Naive thymus-derived CD8-positive, alpha-beta T cell (primary cell): ENCODE measurements at regions of chr17 and their contacts with region 1.

Region 1: GRCh38 chr17:75784473-75785015 is at the start of gene UNK:
- DNase-seq: peak; percentile 85 to 99 (median 95)
- ATAC-seq: peak; percentile 71 to 76
- H3K4me3 Mint-ChIP-seq: peak within 1 kb of the TSS; percentile 86 to 97 (median 92)
- H3K27ac Mint-ChIP-seq: peak within 1 kb of the TSS; percentile 94 to 100 (median 100)
- H3K4me1 Mint-ChIP-seq: peaks cover 21 to 72% (median 49%) of the 10 kb centered on the region in 4 donors
- H3K27me3 Mint-ChIP-seq: peaks cover 0 to 4% (median 0%) of the 10 kb centered on the region in 5 donors
- polyA plus RNA-seq, gene UNK: 24.4 to 26.9 (median 26.2) TPM

Region 2: GRCh38 chr17:75693500-75694481 is 90.8 kb before region 1 on chr17:
- POLR2A ChIA-PET with region 1: no interaction called
- DNase-seq: no peak
- ATAC-seq: no peak
- H3K4me3 Mint-ChIP-seq: no peak overlapping the region
- H3K27ac Mint-ChIP-seq: peak overlapping the region in 2 of 10 donors; percentile 11 to 19
- H3K4me1 Mint-ChIP-seq: peaks cover 14 to 39% (median 36%) of the 10 kb centered on the region in 4 donors
- H3K27me3 Mint-ChIP-seq: no peaks in the 10 kb centered on the region

Region 3: GRCh38 chr17:75827252-75828115 is 42.9 kb after region 1 on chr17:
- POLR2A ChIA-PET with region 1: interaction called, 74 read pairs
- DNase-seq: peak; percentile 47 to 82 (median 58)
- ATAC-seq: peak; percentile 68 to 70
- H3K4me3 Mint-ChIP-seq: peak overlapping the region; percentile 52 to 79 (median 63)
- H3K27ac Mint-ChIP-seq: peak overlapping the region; percentile 25 to 93 (median 85)
- H3K4me1 Mint-ChIP-seq: peaks cover 6 to 33% (median 20%) of the 10 kb centered on the region in 4 donors
- H3K27me3 Mint-ChIP-seq: no peaks in the 10 kb centered on the region

Region 4: GRCh38 chr17:75877752-75878173 is 93.2 kb after region 1 on chr17:
- POLR2A ChIA-PET with region 1: interaction called, 13 read pairs
- DNase-seq: peak; percentile 51 to 81 (median 66)
- ATAC-seq: peak; percentile 71
- H3K4me3 Mint-ChIP-seq: peak overlapping the region; percentile 80 to 92 (median 87)
- H3K27ac Mint-ChIP-seq: peak overlapping the region; percentile 65 to 96 (median 92)
- H3K4me1 Mint-ChIP-seq: peaks cover 25 to 57% (median 53%) of the 10 kb centered on the region in 4 donors
- H3K27me3 Mint-ChIP-seq: peaks cover 0 to 2% (median 0%) of the 10 kb centered on the region in 5 donors

Region 5: GRCh38 chr17:75896415-75897159 is 112.0 kb after region 1 on chr17 and contains the start of gene TRIM65:
- POLR2A ChIA-PET with region 1: interaction called, 16 read pairs
- DNase-seq: peak; percentile 56 to 84 (median 76)
- ATAC-seq: peak; percentile 84 to 87
- H3K4me3 Mint-ChIP-seq: peak within 1 kb of the TSS; percentile 75 to 87 (median 82)
- H3K27ac Mint-ChIP-seq: peak within 1 kb of the TSS; percentile 77 to 92 (median 86)
- H3K4me1 Mint-ChIP-seq: peaks cover 19 to 28% (median 26%) of the 10 kb centered on the region in 4 donors
- H3K27me3 Mint-ChIP-seq: no peaks in the 10 kb centered on the region
- polyA plus RNA-seq, gene TRIM65: 13.4 to 31.8 (median 18.9) TPM

Region 6: DNA sequence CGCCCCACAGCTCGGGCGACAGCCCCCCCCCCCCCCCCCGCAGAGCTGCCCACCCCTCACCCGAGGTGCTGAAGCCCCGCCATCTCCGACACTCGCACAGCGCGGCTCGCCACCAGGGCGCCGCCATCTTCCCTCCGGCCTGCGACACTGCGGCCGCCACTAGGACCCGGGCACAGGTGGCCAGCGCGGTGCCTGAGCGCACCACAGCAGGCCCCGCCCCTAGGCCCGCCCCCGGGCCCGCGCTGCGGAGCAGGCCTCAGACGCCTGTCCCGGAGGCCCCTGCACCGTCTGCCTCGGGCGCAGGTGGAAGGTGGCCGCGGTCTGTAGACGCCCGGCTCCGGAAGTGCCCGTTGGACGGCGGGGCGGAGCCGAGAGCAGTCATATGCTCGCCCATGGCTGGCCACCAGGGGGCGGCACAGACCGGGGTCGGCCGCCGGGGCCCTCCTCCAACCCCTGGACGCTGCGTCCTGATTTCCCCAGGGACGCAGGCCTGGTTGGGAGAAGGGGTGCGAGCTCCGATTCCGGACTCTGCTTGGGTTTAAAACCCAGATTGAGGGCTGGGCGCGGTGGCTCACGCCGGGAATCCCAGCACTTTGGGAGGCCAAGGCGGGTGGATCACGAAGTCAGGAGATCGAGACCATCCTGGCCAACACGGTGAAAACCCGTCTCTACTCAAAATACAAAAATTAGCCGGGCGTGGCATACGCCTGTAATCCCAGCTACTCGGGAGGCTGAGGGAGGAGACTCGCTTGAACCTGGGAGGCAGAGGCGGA is 120.4 kb after region 1 on chr17 and contains the start of gene MRPL38:
- POLR2A ChIA-PET with region 1: interaction called, 10 read pairs
- DNase-seq: peak; percentile 87 to 96 (median 92)
- ATAC-seq: peak; percentile 95 to 97
- H3K4me3 Mint-ChIP-seq: peak within 1 kb of the TSS; percentile 83 to 94 (median 90)
- H3K27ac Mint-ChIP-seq: peak within 1 kb of the TSS; percentile 85 to 97 (median 95)
- H3K4me1 Mint-ChIP-seq: peaks cover 9 to 29% (median 21%) of the 10 kb centered on the region in 4 donors
- H3K27me3 Mint-ChIP-seq: no peaks in the 10 kb centered on the region
- polyA plus RNA-seq, gene MRPL38: 56.4 to 78.7 (median 64.7) TPM

Region 7: GRCh38 chr17:75940724-75941441 is 156.3 kb after region 1 on chr17 and contains the start of gene FBF1:
- POLR2A ChIA-PET with region 1: interaction called, 17 read pairs
- DNase-seq: peak; percentile 80 to 91 (median 83)
- ATAC-seq: peak; percentile 99
- H3K4me3 Mint-ChIP-seq: peak within 1 kb of the TSS; percentile 84 to 96 (median 92)
- H3K27ac Mint-ChIP-seq: peak within 1 kb of the TSS; percentile 72 to 97 (median 90)
- H3K4me1 Mint-ChIP-seq: peaks cover 3 to 18% (median 15%) of the 10 kb centered on the region in 4 donors
- H3K27me3 Mint-ChIP-seq: no peaks in the 10 kb centered on the region
- polyA plus RNA-seq, gene FBF1: 2.4 to 8.0 (median 7.5) TPM

Region 8: DNA sequence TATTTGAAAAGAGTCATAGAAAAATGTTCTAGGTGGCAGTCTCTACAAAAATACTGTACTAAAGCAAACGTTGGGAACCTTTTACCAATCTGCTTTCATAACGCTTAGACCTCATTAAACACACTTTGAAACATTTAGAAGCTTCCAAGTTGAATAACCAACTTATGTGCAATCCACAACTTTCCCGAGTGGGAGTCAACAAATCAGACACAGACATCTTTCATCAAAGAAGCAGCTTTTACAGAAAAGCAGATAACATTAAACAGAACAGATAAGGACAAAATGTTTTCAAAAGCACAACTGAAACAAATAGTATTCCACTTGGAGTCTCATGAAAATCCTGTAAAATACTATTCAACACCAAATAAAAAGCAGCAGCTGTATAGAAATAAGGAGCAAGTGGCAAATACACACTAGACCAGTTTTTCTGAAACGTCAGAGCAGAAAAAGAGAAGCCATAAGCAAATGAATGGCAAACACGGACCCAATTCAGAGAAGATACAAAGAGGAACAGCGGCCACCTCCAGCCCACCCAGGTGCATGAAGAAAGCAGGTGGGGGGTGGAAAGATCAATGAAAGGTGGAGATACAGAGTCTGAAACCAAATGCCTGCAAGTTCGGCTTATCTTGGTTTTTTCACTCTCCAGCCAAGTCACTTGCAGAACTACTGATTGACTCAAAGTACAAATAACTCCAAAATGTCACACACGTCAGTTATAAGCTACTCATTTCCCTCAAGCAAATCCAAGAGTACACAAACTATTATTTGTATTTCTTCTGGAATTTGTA is 174.7 kb after region 1 on chr17:
- POLR2A ChIA-PET with region 1: no interaction called
- DNase-seq: no peak
- ATAC-seq: no peak
- H3K4me3 Mint-ChIP-seq: no peak overlapping the region
- H3K27ac Mint-ChIP-seq: peak overlapping the region in 1 of 10 donors; percentile 48
- H3K4me1 Mint-ChIP-seq: peaks cover 0 to 11% (median 7%) of the 10 kb centered on the region in 4 donors
- H3K27me3 Mint-ChIP-seq: no peaks in the 10 kb centered on the region